Breast epithelium (tissue), 4 donors: ENCODE measurements at regions of chr1 and their contacts with region 1.

Region 1: DNA sequence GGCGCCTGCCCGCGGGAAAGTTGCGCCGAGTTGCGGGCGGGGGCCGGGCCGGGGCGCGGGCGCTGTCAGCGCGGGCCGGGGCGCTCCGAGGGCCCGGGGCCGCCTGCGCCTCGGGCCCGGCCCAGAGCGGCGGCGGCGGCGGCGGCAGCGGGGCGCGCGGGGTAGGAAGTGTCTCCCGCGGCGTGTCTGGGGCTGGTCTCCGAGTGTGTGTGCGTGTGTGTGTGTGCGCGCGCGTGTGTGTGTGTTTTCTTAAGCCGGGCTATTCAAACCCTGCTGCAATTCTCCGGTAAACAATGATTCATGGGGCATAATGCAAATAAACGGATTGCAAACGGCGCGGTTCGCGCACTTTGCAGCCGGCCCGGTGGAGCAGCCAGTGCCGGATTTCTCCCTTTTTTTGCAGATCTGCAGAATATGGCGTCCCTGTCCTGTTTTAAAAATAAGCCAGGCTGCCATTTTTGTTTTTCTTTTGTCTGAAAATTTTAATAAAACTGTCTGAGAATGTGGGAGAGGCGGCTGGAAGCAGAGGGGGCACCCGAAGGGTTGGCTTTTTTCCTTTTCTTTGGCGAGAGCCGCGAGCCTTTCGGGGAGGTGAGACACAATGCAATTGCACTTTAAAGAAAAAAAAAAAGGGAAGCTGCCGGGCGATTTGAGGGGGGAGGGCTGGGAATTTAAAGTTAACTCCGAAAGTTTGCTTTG is 558 bp downstream of the ZNF362 start:
- DNase-seq: peak; percentile 38 to 69
- H3K4me3 ChIP-seq: peak overlapping the region; percentile 70 to 92 (median 70)
- H3K27ac ChIP-seq: peak overlapping the region; percentile 74 to 100
- H3K4me1 ChIP-seq: peaks cover 0 to 29% of the 10 kb centered on the region in 2 donors
- H3K27me3 ChIP-seq: no peaks in the 10 kb centered on the region
- CTCF ChIP-seq: no peak
- POLR2A ChIP-seq: peak; percentile 19

Region 2: DNA sequence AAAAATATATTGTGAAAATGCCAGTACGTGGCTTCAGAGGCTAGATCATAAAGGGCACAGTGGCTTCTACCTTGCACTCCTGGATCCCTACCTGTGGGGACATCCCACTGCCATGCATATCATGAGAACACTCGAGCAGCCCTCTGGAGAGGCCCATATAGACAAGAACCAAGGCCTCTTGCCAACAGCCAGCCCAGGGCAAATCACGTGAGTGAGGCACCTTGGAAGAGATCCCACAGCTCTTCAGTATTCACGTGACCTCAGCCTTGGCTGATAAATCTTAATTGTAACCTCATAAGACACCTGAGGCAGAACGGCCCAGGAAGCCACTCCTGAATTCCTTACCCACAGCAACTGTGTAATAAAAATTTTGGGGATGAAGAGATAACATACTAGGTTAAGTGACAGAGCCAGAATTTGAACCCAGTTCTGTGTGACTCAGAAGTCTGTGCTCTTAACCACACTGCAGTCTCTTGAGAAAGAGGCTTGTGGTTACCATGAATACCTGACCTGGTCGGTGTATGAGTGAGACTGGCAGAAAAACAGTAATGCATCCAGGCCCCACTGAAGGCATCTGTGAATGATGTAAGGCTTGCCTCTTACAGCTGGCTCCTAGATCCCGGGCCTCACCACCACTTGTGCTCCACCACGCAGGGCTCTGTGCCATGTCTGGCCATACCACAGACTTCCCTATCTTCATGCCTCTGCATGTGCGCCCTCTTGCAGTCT is 70.9 kb after region 1 on chr1:
- intact Hi-C with region 1: loop called (anchors 2 kb)
- DNase-seq: peak in 1 of 2 donors; percentile 53
- H3K4me3 ChIP-seq: no peak overlapping the region
- H3K27ac ChIP-seq: peak overlapping the region; percentile 54 to 57
- H3K4me1 ChIP-seq: peaks cover 4 to 19% of the 10 kb centered on the region in 2 donors
- H3K27me3 ChIP-seq: no peaks in the 10 kb centered on the region
- CTCF ChIP-seq: no peak
- POLR2A ChIP-seq: no peak